SK-N-SH (cell line): ENCODE measurements at regions of chr1 and their contacts with region 1.

Region 1: GRCh38 chr1:160046494-160047110 is 14.8 kb upstream of the PIGM start:
- DNase-seq: peak; percentile 80
- H3K4me3 ChIP-seq: no peak overlapping the region
- H3K27ac ChIP-seq: no peak overlapping the region
- H3K4me1 ChIP-seq: peaks cover 0 to 11% of the 10 kb centered on the region in 2 experiments; a peak in 2 of 4 replicates
- H3K27me3 ChIP-seq: peaks cover 30% of the 10 kb centered on the region; the same call in 1 of the 2 replicates
- CTCF ChIP-seq: peak; percentile 67
- EP300 ChIP-seq: peak in 1 of 2 experiments; percentile 27; a peak in 1 of 4 replicates
- RAD21 ChIP-seq: peak; percentile 77

Region 2: GRCh38 chr1:160031365-160032164 is 15.0 kb before region 1 on chr1 and contains the start of gene PIGM:
- CTCF ChIA-PET with region 1: interaction called, 44 read pairs
- POLR2A ChIA-PET with region 1: interaction called, 4 read pairs
- DNase-seq: peak; percentile 89
- H3K4me3 ChIP-seq: peak within 1 kb of the TSS; percentile 84 to 93
- H3K27ac ChIP-seq: peak within 1 kb of the TSS in 1 of 2 experiments; percentile 82; a peak in 2 of 4 replicates
- H3K4me1 ChIP-seq: peaks cover 0 to 15% of the 10 kb centered on the region in 2 experiments; a peak in 2 of 4 replicates
- H3K27me3 ChIP-seq: peaks cover 5% of the 10 kb centered on the region; the same call in 1 of the 2 replicates
- CTCF ChIP-seq: no peak
- EP300 ChIP-seq: no peak
- RAD21 ChIP-seq: no peak
- polyA plus RNA-seq, gene PIGM: 4.0 and 5.1 TPM in 2 replicates

Region 3: GRCh38 chr1:160058087-160058486 is 11.5 kb after region 1 on chr1:
- CTCF ChIA-PET with region 1: interaction called, 24 read pairs
- POLR2A ChIA-PET with region 1: no interaction called
- DNase-seq: no peak
- H3K4me3 ChIP-seq: no peak overlapping the region
- H3K27ac ChIP-seq: no peak overlapping the region
- H3K4me1 ChIP-seq: peaks cover 0 to 9% of the 10 kb centered on the region in 2 experiments; a peak in 1 of 4 replicates
- H3K27me3 ChIP-seq: peaks cover 70% of the 10 kb centered on the region
- CTCF ChIP-seq: peak; percentile 19; the same call in 1 of the 2 replicates
- EP300 ChIP-seq: no peak
- RAD21 ChIP-seq: no peak

Region 4: GRCh38 chr1:160064164-160064563 is 17.6 kb after region 1 on chr1:
- CTCF ChIA-PET with region 1: interaction called, 24 read pairs
- POLR2A ChIA-PET with region 1: no interaction called
- DNase-seq: no peak
- H3K4me3 ChIP-seq: no peak overlapping the region
- H3K27ac ChIP-seq: no peak overlapping the region
- H3K4me1 ChIP-seq: peaks cover 0 to 9% of the 10 kb centered on the region in 2 experiments; a peak in 1 of 4 replicates
- H3K27me3 ChIP-seq: peaks cover 51% of the 10 kb centered on the region
- CTCF ChIP-seq: no peak
- EP300 ChIP-seq: no peak
- RAD21 ChIP-seq: no peak

Region 5: DNA sequence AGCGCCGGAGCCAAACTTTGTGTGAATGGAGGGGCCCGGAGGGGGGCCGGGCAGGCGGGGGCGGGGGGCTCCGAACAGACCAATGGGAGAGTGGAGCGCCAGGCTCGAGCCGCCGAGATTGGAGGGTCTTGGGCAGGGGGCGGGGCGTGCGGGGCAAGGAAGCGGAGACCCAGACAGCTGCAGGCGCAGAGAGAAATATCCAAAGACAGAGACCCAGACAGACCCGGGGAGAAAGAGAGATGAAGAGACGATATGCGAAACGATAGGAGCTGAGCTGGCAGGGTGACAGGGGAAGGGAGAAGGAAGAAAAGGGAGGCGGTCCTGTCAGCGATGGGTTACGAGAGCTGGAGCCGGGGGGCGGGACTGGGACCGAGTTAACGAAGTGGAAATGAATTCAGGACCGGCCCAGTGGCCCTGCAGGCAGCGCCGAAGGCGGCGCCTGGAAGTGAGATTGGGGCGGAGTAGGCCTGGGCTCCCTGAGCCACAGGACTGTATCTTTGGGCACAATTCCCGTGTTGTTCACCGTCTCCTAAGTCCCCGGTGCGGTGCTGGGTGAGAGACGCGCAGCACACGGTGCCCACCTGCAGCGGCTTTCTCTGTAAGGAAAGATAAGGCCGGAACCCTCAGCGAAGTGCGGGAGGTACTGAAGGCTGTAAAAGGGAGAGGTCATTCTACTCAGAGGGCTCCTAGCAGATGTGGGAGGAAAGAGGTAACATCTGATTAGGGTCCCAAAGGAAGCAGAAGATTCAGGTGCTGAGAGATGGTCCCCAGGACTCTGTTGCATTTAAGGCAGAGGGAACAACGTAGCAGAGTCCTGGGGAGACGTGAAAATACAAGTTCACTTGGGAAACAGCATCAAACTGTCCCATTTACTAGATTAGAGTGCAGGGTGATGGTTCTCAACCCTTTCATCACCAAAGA is 23.9 kb after region 1 on chr1:
- CTCF ChIA-PET with region 1: interaction called, 163 read pairs
- POLR2A ChIA-PET with region 1: no interaction called
- DNase-seq: peak; percentile 97
- H3K4me3 ChIP-seq: peak overlapping the region; percentile 52 to 68
- H3K27ac ChIP-seq: no peak overlapping the region
- H3K4me1 ChIP-seq: peaks cover 0 to 9% of the 10 kb centered on the region in 2 experiments; a peak in 1 of 4 replicates
- H3K27me3 ChIP-seq: peaks cover 31% of the 10 kb centered on the region
- CTCF ChIP-seq: no peak
- EP300 ChIP-seq: no peak
- RAD21 ChIP-seq: no peak

Region 6: GRCh38 chr1:160078512-160079195 is 32.1 kb after region 1 on chr1:
- CTCF ChIA-PET with region 1: interaction called, 163 read pairs
- POLR2A ChIA-PET with region 1: interaction called, 3 read pairs
- DNase-seq: peak; percentile 68
- H3K4me3 ChIP-seq: no peak overlapping the region; a peak in 1 of 4 replicates
- H3K27ac ChIP-seq: no peak overlapping the region
- H3K4me1 ChIP-seq: peaks cover 0 to 10% of the 10 kb centered on the region in 2 experiments; a peak in 1 of 4 replicates
- H3K27me3 ChIP-seq: peaks cover 36% of the 10 kb centered on the region
- CTCF ChIP-seq: peak; percentile 79
- EP300 ChIP-seq: no peak
- RAD21 ChIP-seq: peak; percentile 54